ENCODE measurements at regions of chr17 and their contacts with region 1.

Region 1: DNA sequence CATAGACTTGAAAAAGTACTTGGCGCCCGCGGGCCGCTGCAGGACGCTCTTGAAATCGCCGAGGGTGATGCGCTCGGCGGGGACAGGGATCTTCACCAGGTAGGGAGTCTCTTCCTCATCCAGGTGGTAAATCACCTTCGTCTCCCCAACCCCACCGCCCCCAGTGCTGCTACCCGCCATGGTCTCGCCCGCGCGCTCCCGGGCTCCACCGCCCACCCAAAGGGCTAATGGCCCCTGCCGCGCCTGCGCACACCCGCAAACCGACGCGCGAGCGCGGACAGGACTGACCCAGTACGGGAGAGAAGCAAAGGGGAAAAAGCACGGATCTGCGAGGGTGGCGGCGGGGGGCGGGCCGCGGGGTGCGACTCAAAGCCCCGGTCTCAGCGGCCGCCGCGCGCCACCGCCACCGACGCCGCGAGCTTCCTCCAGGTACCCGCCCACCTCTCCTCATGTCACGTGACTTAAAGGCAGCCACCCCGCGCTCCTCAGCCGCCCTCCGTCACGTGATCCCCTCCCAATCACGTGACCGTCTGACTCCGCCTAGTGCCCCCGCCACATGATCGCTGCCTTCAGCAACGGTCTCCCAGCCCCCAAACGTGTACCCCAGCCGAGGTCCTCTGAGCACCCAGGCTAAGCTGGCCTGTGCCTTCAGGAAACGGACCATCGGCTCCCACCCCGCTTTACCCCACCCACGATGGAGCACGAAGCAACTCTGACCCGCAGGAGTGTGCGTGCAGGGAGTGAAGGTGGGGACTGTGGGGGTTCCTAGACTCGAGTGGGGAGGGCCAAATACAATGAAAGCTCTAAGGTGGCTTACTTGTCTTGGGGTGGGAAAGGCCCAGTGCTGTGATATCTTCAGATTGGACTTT is at the start of gene DVL2:
- DNase-seq: peak; percentile 98
- ATAC-seq: peak; percentile 48
- H3K4me3 Mint-ChIP-seq: peak within 1 kb of the TSS; percentile 99
- H3K27ac Mint-ChIP-seq: peak within 1 kb of the TSS; percentile 96
- H3K4me1 Mint-ChIP-seq: peaks cover 44% of the 10 kb centered on the region
- H3K27me3 Mint-ChIP-seq: peaks cover 2% of the 10 kb centered on the region
- CTCF ChIP-seq: no peak
- total RNA-seq, gene DVL2: 50.0 to 53.6 TPM

Region 2: GRCh38 chr17:7114875-7115614 is 119.3 kb before region 1 on chr17:
- CTCF ChIA-PET with region 1: no interaction called
- POLR2A ChIA-PET with region 1: no interaction called
- intact Hi-C with region 1: no loop called
- DNase-seq: no peak
- ATAC-seq: no peak
- H3K4me3 Mint-ChIP-seq: no peak overlapping the region
- H3K27ac Mint-ChIP-seq: no peak overlapping the region
- H3K4me1 Mint-ChIP-seq: no peaks in the 10 kb centered on the region
- H3K27me3 Mint-ChIP-seq: peaks cover 7% of the 10 kb centered on the region
- CTCF ChIP-seq: no peak

Region 3: DNA sequence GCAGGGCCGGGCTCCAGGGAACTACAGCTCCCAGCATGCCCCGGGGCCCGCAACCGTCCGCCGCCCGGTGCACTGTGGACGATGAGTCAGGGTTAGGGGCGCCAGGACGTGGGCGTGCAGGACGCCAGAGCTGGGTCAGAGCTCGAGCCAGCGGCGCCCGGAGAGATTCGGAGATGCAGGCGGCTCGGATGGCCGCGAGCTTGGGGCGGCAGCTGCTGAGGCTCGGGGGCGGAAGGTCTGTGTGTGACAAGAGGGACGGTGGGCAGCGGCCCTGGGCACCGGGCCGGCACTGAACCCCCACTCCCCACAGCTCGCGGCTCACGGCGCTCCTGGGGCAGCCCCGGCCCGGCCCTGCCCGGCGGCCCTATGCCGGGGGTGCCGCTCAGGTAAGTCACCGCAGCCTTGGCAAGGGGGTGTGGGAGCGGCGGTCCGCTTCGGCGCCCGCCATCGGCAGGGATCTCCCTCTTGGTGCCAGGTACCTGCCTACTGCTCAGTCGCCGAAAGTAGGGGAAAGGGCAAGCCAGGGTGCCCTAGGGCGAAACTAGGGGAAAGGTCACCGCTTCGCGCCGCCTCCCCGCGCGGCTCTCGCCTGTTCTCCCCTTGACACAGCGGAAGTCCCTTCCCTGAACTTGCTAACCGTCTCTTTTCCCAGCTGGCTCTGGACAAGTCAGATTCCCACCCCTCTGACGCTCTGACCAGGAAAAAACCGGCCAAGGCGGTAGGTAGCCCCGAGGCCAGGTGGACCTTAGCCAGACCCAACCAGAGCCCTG is 14.3 kb before region 1 on chr17 and contains the starts of genes ACADVL and DLG4:
- CTCF ChIA-PET with region 1: interaction called, 41 read pairs
- POLR2A ChIA-PET with region 1: interaction called, 261 read pairs
- intact Hi-C with region 1: no loop called
- DNase-seq: peak; percentile 96
- ATAC-seq: peak; percentile 74
- H3K4me3 Mint-ChIP-seq: peak within 1 kb of the TSS; percentile 94
- H3K27ac Mint-ChIP-seq: peak within 1 kb of the TSS; percentile 94
- H3K4me1 Mint-ChIP-seq: peaks cover 55% of the 10 kb centered on the region
- H3K27me3 Mint-ChIP-seq: no peaks in the 10 kb centered on the region
- CTCF ChIP-seq: no peak
- total RNA-seq, gene ACADVL: 288 to 291 TPM
- total RNA-seq, gene DLG4: 9.5 to 9.7 TPM